ENCODE measurements at regions of chr18 and their contacts with region 1.

Region 1: GRCh38 chr18:61782545-61782944 is 110.3 kb downstream of the RNF152 start:
- DNase-seq: no peak
- ATAC-seq: no peak
- H3K4me3 ChIP-seq: no peak overlapping the region
- H3K4me3 Mint-ChIP-seq: no peak overlapping the region
- H3K27ac ChIP-seq: no peak overlapping the region
- H3K27ac Mint-ChIP-seq: no peak overlapping the region
- H3K4me1 ChIP-seq: no peaks in the 10 kb centered on the region
- H3K4me1 Mint-ChIP-seq: no peaks in the 10 kb centered on the region
- H3K27me3 ChIP-seq: no peaks in the 10 kb centered on the region
- H3K27me3 Mint-ChIP-seq: peaks cover 0 to 7% (median 5%) of the 10 kb centered on the region in 5 donors

Region 2: DNA sequence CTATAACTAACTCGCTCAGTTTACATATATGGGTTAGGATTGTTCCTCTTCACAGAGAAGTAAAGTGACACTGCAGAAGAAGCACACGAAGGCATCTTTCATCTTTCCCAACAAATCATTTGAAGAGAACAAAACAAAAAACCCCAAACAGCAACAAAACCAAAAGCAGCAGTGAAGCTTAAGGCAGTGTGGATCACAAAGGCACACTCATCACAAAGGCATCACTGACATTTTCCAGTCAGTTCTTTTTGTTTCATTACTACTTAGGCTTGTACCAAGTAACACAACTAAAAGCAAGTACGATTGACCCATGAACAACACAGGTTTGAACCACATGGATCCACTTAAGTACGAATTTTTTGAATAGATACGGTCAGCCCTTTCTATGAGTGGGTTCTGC is 34.5 kb after region 1 on chr18:
- CTCF ChIA-PET with region 1: no interaction called
- POLR2A ChIA-PET with region 1: no interaction called
- intact Hi-C with region 1: loop called in 1 of 2 experiments (anchors 2 kb)
- DNase-seq: no peak
- ATAC-seq: no peak
- H3K4me3 ChIP-seq: no peak overlapping the region
- H3K4me3 Mint-ChIP-seq: no peak overlapping the region
- H3K27ac ChIP-seq: no peak overlapping the region
- H3K27ac Mint-ChIP-seq: no peak overlapping the region
- H3K4me1 ChIP-seq: no peaks in the 10 kb centered on the region
- H3K4me1 Mint-ChIP-seq: no peaks in the 10 kb centered on the region
- H3K27me3 ChIP-seq: no peaks in the 10 kb centered on the region
- H3K27me3 Mint-ChIP-seq: peaks cover 0 to 6% (median 5%) of the 10 kb centered on the region in 5 donors